Activated CD4-positive, alpha-beta T cell treated with anti-CD3 and anti-CD28 coated beads for 36 hours (primary cell): ENCODE measurements at regions of chr3 and their contacts with region 1.

Region 1: DNA sequence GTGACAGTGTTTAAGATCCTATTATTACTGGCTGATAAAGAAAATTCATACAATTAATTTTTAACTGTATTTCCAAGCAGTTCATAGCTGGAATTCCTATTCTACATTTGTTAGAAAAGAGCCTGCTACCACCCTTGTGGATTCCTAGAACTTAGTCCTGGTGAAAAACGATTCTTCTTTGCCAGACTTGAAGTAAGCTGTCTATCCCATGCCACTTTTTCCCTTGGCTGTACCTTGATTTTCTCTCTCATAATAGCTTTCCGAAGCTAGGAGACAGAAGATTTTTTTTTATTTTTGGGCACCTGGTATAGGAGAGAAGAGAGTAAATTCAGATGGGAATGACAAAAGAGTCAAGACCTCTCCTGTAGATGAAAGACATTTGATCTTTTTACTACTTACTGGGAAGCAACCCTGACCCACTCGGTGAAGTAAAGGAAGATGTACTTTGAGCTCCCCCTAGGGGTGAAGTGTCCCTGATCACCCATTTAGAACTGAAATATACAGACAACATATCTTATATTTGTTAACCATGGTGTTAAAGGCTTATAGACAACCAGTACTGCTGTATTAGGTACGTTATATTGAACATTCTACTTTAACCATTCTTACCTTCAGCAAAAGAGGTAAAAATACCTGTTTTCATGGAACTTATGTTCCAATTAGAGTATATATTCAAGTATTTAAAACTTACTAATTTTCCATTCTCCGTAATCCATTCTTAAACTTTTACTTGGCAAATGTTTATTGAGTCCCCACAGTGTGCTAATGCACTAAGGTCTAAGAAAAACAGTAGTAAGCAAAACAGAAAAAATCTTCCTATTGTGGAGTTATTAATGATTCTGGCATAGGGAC is 36.2 kb upstream of the C3orf38 start:
- DNase-seq: peak; percentile 64
- ATAC-seq: peak; percentile 64
- H3K4me3 Mint-ChIP-seq: no peak overlapping the region
- H3K27ac Mint-ChIP-seq: no peak overlapping the region
- H3K4me1 Mint-ChIP-seq: peaks cover 27% of the 10 kb centered on the region
- H3K27me3 Mint-ChIP-seq: no peaks in the 10 kb centered on the region

Region 2: DNA sequence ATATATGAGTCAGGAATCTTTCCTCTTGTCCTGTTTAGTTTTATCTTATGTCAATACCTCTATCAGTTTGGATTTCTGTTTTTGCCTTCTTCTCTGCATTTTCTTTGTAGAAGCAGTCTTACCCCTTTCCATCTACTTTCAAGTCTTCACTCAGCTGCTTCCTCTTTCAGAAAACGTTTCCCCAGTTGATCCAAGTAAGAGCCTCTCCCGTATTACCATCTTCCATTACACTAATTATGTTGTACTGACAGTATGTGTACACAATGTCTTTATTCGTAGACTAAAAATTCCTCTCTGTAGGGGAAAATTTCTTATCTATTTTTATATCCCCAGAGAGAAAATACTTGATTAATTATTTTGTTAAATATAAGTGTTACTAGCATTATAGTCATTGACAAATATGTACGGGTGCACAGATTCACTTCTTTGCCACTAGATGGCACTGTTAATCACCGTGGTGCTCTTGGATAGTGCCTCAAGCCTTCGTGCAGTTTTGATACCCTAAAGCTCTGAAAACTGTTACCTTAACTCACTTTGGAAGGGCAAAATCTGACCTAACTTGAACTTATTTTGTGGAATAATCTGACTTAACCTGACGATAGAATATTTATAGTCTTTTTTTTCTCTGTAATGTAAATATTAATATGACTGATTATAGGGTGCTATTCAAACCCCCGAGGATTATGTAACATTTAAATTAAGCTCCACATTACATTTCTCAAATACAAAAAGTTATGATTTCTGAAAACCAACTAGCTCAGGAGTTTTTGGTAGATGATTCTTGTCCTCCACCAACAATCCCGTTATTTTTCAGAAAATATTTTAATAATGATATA is 763.0 kb before region 1 on chr3:
- CTCF ChIA-PET with region 1: interaction called, 5 read pairs
- POLR2A ChIA-PET with region 1: no interaction called
- intact Hi-C with region 1: loop called (anchors 1 to 2 kb)
- DNase-seq: peak; percentile 20
- ATAC-seq: peak; percentile 85
- H3K4me3 Mint-ChIP-seq: no peak overlapping the region
- H3K27ac Mint-ChIP-seq: no peak overlapping the region
- H3K4me1 Mint-ChIP-seq: no peaks in the 10 kb centered on the region
- H3K27me3 Mint-ChIP-seq: peaks cover 5% of the 10 kb centered on the region

Region 3: DNA sequence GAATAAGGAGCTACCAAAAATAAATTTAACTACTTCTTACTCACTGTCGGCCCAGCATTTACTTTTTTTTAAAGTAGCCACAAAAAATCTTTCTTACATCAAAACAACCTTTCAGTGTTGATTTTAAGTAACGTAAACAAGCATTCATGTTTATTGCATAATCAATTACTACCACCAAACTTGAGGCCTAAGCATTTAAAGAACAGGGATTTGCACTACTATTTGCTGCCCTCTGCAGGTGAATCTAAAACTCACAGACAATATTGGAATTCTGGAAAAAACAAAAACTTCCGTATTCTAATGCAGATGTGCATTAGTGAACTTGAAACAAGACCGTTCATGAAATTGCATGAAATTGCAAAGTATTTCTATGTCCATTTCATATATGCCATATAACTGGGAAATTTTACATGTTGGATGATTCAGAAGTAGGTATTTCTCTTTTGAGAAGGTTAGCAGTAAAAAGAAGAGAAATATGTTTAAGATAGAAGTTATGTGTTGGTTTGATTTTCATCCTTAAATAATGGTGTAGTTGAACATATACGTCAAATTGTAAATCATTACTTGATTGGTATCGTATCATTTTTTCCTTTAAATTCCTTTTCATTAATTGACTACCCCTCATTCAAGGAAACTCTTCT is 110.3 kb before region 1 on chr3:
- CTCF ChIA-PET with region 1: interaction called, 18 read pairs
- POLR2A ChIA-PET with region 1: no interaction called
- intact Hi-C with region 1: loop called (anchors 5 kb)
- DNase-seq: no peak
- ATAC-seq: no peak
- H3K4me3 Mint-ChIP-seq: no peak overlapping the region
- H3K27ac Mint-ChIP-seq: no peak overlapping the region
- H3K4me1 Mint-ChIP-seq: peaks cover 7% of the 10 kb centered on the region
- H3K27me3 Mint-ChIP-seq: no peaks in the 10 kb centered on the region

Region 4: DNA sequence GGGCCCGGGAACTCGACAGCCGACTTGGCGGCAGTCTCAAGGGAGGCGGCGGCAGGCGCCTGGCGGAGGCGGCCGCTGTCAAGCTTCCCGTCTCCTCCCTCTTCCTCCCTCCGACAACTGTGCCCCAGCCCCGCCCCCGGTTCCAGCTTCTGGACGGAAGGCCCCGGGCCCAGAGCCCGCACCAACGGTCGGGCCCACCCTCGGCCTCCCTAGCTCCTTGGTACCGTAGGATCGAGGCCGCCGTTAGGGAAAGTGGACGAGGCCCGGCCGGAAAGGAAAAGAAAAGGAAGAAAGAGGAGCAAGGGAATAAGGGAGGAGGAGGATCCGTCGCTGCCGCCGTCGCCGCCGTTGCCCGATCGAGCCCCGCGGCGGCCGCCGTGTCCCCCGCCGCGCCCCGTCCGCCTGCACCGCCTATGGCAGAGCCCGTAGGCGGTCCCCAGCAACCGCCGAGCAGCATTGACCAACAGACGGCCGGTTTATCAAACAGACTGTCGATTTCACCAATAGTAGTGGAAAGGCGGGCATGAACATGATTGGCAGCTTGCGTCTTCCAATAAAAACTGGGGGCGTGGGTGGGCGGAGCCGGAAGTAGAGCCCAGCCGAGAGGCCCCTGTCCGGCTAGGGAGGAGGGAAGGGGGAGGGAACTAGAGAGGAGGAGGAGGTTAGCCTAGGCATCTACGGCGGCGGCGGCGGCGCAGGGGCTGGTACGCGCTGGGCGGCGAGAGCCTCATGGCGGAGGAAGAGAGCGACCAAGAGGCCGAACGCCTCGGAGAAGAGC is 54.8 kb before region 1 on chr3 and contains the starts of genes CGGBP1 and ZNF654:
- CTCF ChIA-PET with region 1: interaction called, 3 read pairs
- POLR2A ChIA-PET with region 1: no interaction called
- intact Hi-C with region 1: loop called (anchors 1 to 5 kb)
- DNase-seq: peak; percentile 99
- ATAC-seq: peak; percentile 96
- H3K4me3 Mint-ChIP-seq: peak within 1 kb of the TSS; percentile 94
- H3K27ac Mint-ChIP-seq: peak within 1 kb of the TSS; percentile 97
- H3K4me1 Mint-ChIP-seq: peaks cover 47% of the 10 kb centered on the region
- H3K27me3 Mint-ChIP-seq: no peaks in the 10 kb centered on the region
- total RNA-seq, gene CGGBP1: 85.4 to 95.5 TPM
- total RNA-seq, gene ZNF654: 21.3 to 28.9 TPM

Region 5: DNA sequence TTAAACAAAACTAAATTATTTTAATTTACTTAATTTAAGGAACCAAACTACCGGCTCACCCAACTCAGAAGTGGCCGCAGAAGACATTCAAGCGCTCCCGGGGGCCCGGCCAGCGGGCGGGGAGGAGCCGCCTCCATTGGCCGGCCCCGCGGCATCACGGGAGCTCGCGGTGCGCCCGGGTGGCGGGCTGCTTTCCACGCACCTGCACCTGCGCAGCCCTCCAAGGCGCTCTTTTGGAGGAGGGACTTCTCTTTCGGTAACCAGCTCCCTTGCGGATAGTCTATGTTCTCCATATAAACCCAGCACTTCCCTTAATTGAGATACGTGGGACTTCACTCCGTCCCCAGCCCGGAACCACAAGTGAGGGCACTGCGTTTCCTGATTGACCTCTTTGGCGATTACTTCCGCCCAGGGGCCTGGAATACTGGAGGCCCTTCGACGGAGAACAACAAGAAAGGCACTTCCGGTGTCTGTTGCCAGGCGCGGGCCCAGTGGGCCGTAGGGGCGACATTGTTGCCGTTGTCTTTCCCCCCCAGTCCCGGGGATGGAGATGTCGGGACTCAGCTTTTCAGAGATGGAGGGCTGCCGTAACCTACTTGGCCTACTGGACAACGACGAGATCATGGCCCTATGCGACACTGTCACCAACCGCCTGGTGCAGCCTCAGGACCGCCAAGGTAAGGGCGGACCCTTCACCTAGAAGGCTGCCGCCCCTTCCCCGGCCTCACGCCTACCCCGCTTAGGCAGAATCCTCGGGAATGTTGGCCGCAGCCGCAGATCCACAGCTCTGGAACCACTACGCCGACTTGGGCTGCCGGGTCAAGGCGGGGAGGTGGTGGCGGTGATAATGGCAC is 36.2 kb after region 1 on chr3 and contains the start of gene C3orf38:
- CTCF ChIA-PET with region 1: interaction called, 12 read pairs
- POLR2A ChIA-PET with region 1: interaction called, 3 read pairs
- intact Hi-C with region 1: loop called in 1 of 2 experiments (anchors 2 kb)
- DNase-seq: peak; percentile 87
- ATAC-seq: peak; percentile 87
- H3K4me3 Mint-ChIP-seq: peak within 1 kb of the TSS; percentile 95
- H3K27ac Mint-ChIP-seq: peak within 1 kb of the TSS; percentile 99
- H3K4me1 Mint-ChIP-seq: peaks cover 37% of the 10 kb centered on the region
- H3K27me3 Mint-ChIP-seq: no peaks in the 10 kb centered on the region
- total RNA-seq, gene C3orf38: 22.4 to 27.4 TPM